ENCODE measurements at regions of chr1 and their contacts with region 1.

Region 1: DNA sequence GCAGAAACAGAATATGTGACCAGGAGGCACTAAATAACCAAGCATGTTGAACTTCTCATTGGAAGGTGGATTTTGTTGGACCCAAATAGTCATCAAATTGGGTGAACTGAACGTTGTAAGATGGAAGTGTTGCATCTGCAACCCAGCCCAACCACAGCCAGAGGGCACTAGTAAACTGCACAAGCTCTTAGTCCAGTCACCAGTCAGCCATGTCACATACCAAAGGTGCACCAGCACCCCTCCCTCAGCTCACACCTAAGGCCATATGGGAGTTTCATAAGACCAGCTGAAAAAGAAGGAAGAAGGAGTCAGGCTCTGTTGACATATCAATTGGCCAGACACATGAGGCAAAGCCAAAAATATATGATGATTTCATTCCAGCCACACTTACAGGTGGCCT is 481.7 kb upstream of the NR5A2 start:
- DNase-seq: no peak
- ATAC-seq: no peak
- H3K4me3 ChIP-seq: no peak overlapping the region
- H3K27ac ChIP-seq: no peak overlapping the region
- H3K4me1 ChIP-seq: no peaks in the 10 kb centered on the region
- H3K27me3 ChIP-seq: no peaks in the 10 kb centered on the region
- CTCF ChIP-seq: no peak

Region 2: DNA sequence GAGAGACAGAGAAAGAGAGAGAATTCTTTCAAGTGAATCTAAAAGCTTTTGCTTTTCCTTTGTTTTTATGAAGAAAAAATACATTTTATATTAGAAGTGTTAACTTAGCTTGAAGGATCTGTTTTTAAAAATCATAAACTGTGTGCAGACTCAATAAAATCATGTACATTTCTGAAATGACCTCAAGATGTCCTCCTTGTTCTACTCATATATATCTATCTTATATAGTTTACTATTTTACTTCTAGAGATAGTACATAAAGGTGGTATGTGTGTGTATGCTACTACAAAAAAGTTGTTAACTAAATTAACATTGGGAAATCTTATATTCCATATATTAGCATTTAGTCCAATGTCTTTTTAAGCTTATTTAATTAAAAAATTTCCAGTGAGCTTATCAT is 789.3 kb before region 1 on chr1:
- intact Hi-C with region 1: loop called in 1 of 2 experiments (anchors 10 kb)
- DNase-seq: peak in 2 of 4 donors; percentile 8 to 34
- ATAC-seq: no peak
- H3K4me3 ChIP-seq: no peak overlapping the region
- H3K27ac ChIP-seq: no peak overlapping the region
- H3K4me1 ChIP-seq: no peaks in the 10 kb centered on the region
- H3K27me3 ChIP-seq: no peaks in the 10 kb centered on the region
- CTCF ChIP-seq: no peak

Region 3: GRCh38 chr1:199226163-199226562 is 319.6 kb before region 1 on chr1:
- intact Hi-C with region 1: no loop called
- DNase-seq: no peak
- ATAC-seq: no peak
- H3K4me3 ChIP-seq: no peak overlapping the region
- H3K27ac ChIP-seq: no peak overlapping the region
- H3K4me1 ChIP-seq: no peaks in the 10 kb centered on the region
- H3K27me3 ChIP-seq: no peaks in the 10 kb centered on the region
- CTCF ChIP-seq: no peak

Region 4: GRCh38 chr1:199399996-199400724 is 145.6 kb before region 1 on chr1:
- intact Hi-C with region 1: no loop called
- DNase-seq: no peak
- ATAC-seq: no peak
- H3K4me3 ChIP-seq: no peak overlapping the region
- H3K27ac ChIP-seq: no peak overlapping the region
- H3K4me1 ChIP-seq: no peaks in the 10 kb centered on the region
- H3K27me3 ChIP-seq: no peaks in the 10 kb centered on the region
- CTCF ChIP-seq: no peak

Measured in left lung (tissue), 14 donors.